Activated naive CD4-positive, alpha-beta T cell treated with anti-CD3 and anti-CD28 coated beads for 36 hours (primary cell): ENCODE measurements at regions of chrX and their contacts with region 1.

Region 1: DNA sequence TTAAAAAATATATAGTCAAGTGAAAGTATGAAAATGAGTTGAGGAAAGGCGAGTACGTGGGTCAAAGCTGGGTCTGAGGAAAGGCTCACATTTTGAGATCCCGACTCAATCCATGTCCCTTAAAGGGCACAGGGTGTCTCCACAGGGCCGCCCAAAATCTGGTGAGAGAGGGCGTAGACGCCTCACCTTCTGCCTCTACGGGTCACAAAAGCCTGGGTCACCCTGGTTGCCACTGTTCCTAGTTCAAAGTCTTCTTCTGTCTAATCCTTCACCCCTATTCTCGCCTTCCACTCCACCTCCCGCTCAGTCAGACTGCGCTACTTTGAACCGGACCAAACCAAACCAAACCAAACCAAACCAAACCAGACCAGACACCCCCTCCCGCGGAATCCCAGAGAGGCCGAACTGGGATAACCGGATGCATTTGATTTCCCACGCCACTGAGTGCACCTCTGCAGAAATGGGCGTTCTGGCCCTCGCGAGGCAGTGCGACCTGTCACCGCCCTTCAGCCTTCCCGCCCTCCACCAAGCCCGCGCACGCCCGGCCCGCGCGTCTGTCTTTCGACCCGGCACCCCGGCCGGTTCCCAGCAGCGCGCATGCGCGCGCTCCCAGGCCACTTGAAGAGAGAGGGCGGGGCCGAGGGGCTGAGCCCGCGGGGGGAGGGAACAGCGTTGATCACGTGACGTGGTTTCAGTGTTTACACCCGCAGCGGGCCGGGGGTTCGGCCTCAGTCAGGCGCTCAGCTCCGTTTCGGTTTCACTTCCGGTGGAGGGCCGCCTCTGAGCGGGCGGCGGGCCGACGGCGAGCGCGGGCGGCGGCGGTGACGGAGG is at the start of gene FMR1:
- DNase-seq: peak; percentile 94
- H3K4me3 Mint-ChIP-seq: peak within 1 kb of the TSS; percentile 93
- H3K27ac Mint-ChIP-seq: peak within 1 kb of the TSS; percentile 94
- H3K4me1 Mint-ChIP-seq: peaks cover 24% of the 10 kb centered on the region
- H3K27me3 Mint-ChIP-seq: no peaks in the 10 kb centered on the region
- total RNA-seq, gene FMR1: 24.5 to 25.7 TPM

Region 2: DNA sequence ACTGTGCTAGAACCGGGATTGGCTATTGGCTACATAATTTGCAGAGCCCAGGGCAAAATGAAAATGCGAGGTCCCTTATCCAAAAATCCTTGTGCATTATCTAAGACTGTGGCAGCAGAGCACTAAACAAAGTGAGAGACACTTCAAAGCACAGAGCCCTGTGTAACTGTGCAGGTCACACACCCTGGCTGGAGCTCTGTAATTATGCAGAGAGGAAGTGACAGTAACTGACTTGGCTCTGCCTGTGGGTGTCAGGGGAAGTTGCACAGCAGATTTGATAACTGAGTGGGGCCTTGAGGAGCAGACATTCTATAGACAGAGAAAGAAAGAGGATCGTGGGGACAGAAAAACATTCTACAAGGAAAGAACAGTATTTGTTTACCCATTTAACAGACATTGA is 173.1 kb before region 1 on chrX:
- CTCF ChIA-PET with region 1: no interaction called
- intact Hi-C with region 1: loop called (anchors 5 kb)
- DNase-seq: peak; percentile 8
- H3K4me3 Mint-ChIP-seq: no peak overlapping the region
- H3K27ac Mint-ChIP-seq: peak overlapping the region; percentile 48
- H3K4me1 Mint-ChIP-seq: peaks cover 19% of the 10 kb centered on the region
- H3K27me3 Mint-ChIP-seq: peaks cover 3% of the 10 kb centered on the region

Region 3: GRCh38 chrX:147894326-147894963 is 17.0 kb before region 1 on chrX:
- CTCF ChIA-PET with region 1: no interaction called
- intact Hi-C with region 1: no loop called
- DNase-seq: no peak
- H3K4me3 Mint-ChIP-seq: no peak overlapping the region
- H3K27ac Mint-ChIP-seq: no peak overlapping the region
- H3K4me1 Mint-ChIP-seq: no peaks in the 10 kb centered on the region
- H3K27me3 Mint-ChIP-seq: peaks cover 4% of the 10 kb centered on the region

Region 4: DNA sequence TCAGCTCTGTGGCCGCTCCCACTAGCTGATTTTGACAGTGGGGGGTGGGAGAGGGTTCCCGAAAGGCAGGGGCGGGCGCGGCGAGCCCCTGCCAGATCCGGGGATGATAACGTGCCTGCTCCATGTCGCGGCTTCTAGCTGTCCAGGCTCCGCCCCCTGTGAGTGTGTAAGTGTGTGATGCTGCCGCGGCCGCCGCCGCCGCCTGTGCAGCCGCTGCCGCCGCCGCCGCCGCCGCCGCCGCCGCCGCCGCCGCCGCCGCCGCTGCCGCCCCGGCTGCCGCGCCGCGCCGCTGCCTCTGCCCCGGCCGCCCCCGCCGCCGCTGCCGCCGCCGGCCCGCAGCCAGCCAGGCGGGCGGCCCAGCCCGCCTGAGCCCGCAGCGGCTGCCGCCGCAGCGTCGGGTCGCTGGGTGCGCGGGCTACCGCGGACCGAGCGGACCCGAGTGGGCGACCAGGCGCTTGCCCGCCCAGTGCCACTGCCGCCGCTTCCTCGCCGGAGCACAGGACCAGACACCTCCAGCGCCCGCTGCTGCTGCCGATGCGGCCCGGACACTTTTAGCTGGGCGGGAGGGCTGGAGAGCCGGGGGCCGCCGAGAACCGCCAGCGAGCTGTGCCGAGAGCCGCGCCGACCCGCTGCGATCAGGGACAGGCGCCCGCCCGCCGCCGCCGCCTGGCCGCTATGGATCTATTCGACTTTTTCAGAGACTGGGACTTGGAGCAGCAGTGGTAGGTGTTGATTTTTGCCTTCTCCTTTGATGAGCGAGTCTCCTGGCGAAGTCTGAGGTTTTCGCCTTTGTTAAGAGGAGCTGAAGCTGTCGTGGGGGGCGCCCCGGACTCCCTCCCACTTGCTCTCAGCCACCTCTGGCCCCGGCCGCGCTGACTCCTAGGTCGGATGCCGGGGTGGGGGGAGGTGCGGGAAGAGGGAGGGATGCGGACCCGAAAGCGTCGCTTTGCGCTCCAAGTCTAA is 589.3 kb after region 1 on chrX and contains the start of gene AFF2:
- CTCF ChIA-PET with region 1: no interaction called
- intact Hi-C with region 1: loop called (anchors 10 kb)
- DNase-seq: peak; percentile 51
- H3K4me3 Mint-ChIP-seq: peak within 1 kb of the TSS; percentile 77
- H3K27ac Mint-ChIP-seq: no peak within 1 kb of the TSS
- H3K4me1 Mint-ChIP-seq: peaks cover 16% of the 10 kb centered on the region
- H3K27me3 Mint-ChIP-seq: peaks cover 2% of the 10 kb centered on the region
- total RNA-seq, gene AFF2: 1.7 to 2.0 TPM